CD4-positive, alpha-beta T cell (primary cell): ENCODE measurements at regions of chr17 and their contacts with region 1.

Region 1: GRCh38 chr17:57849874-57850754 is at the start of gene MRPS23:
- DNase-seq: peak; percentile 92 to 99 (median 95)
- ATAC-seq: peak; percentile 91
- H3K4me3 ChIP-seq: peak within 1 kb of the TSS; percentile 99
- H3K4me3 Mint-ChIP-seq: peak within 1 kb of the TSS; percentile 95
- H3K27ac ChIP-seq: peak within 1 kb of the TSS; percentile 88 to 93
- H3K27ac Mint-ChIP-seq: peak within 1 kb of the TSS; percentile 97
- H3K4me1 ChIP-seq: peaks cover 42% of the 10 kb centered on the region
- H3K4me1 Mint-ChIP-seq: peaks cover 45% of the 10 kb centered on the region
- H3K27me3 ChIP-seq: no peaks in the 10 kb centered on the region
- H3K27me3 Mint-ChIP-seq: no peaks in the 10 kb centered on the region
- CTCF ChIP-seq: no peak
- total RNA-seq, gene MRPS23: 14.6 to 14.7 TPM

Region 2: GRCh38 chr17:57255776-57256681 is 594.1 kb before region 1 on chr17 and contains the start of gene MSI2:
- CTCF ChIA-PET with region 1: no interaction called
- POLR2A ChIA-PET with region 1: interaction called, 3 read pairs
- intact Hi-C with region 1: loop called in 1 of 2 experiments (anchors 5 kb)
- DNase-seq: peak; percentile 82 to 96 (median 90)
- ATAC-seq: peak; percentile 71
- H3K4me3 ChIP-seq: peak within 1 kb of the TSS; percentile 74
- H3K4me3 Mint-ChIP-seq: peak within 1 kb of the TSS; percentile 99
- H3K27ac ChIP-seq: peak within 1 kb of the TSS; percentile 72 to 82
- H3K27ac Mint-ChIP-seq: peak within 1 kb of the TSS; percentile 98
- H3K4me1 ChIP-seq: peaks cover 35% of the 10 kb centered on the region
- H3K4me1 Mint-ChIP-seq: peaks cover 48% of the 10 kb centered on the region
- H3K27me3 ChIP-seq: no peaks in the 10 kb centered on the region
- H3K27me3 Mint-ChIP-seq: no peaks in the 10 kb centered on the region
- CTCF ChIP-seq: no peak
- total RNA-seq, gene MSI2: 129 to 132 TPM

Region 3: GRCh38 chr17:57861000-57861789 is 11.1 kb after region 1 on chr17:
- CTCF ChIA-PET with region 1: no interaction called
- POLR2A ChIA-PET with region 1: interaction called, 44 read pairs
- intact Hi-C with region 1: no loop called
- DNase-seq: peak in 12 of 14 experiments; percentile 19 to 75 (median 42)
- ATAC-seq: peak; percentile 74
- H3K4me3 ChIP-seq: peak overlapping the region; percentile 52
- H3K4me3 Mint-ChIP-seq: peak overlapping the region; percentile 89
- H3K27ac ChIP-seq: no peak overlapping the region
- H3K27ac Mint-ChIP-seq: no peak overlapping the region
- H3K4me1 ChIP-seq: peaks cover 21% of the 10 kb centered on the region
- H3K4me1 Mint-ChIP-seq: peaks cover 10% of the 10 kb centered on the region
- H3K27me3 ChIP-seq: peaks cover 10 to 14% of the 10 kb centered on the region in 2 experiments
- H3K27me3 Mint-ChIP-seq: peaks cover 14% of the 10 kb centered on the region
- CTCF ChIP-seq: no peak

Region 4: GRCh38 chr17:57995076-57995956 is 145.2 kb after region 1 on chr17:
- CTCF ChIA-PET with region 1: interaction called, 5 read pairs
- POLR2A ChIA-PET with region 1: interaction called, 27 read pairs
- intact Hi-C with region 1: no loop called
- DNase-seq: peak; percentile 27 to 81 (median 41)
- ATAC-seq: peak; percentile 89
- H3K4me3 ChIP-seq: no peak overlapping the region
- H3K4me3 Mint-ChIP-seq: peak overlapping the region; percentile 25
- H3K27ac ChIP-seq: peak overlapping the region; percentile 9 to 12
- H3K27ac Mint-ChIP-seq: peak overlapping the region; percentile 37
- H3K4me1 ChIP-seq: peaks cover 15% of the 10 kb centered on the region
- H3K4me1 Mint-ChIP-seq: peaks cover 56% of the 10 kb centered on the region
- H3K27me3 ChIP-seq: no peaks in the 10 kb centered on the region
- H3K27me3 Mint-ChIP-seq: no peaks in the 10 kb centered on the region
- CTCF ChIP-seq: peak; percentile 73

Region 5: DNA sequence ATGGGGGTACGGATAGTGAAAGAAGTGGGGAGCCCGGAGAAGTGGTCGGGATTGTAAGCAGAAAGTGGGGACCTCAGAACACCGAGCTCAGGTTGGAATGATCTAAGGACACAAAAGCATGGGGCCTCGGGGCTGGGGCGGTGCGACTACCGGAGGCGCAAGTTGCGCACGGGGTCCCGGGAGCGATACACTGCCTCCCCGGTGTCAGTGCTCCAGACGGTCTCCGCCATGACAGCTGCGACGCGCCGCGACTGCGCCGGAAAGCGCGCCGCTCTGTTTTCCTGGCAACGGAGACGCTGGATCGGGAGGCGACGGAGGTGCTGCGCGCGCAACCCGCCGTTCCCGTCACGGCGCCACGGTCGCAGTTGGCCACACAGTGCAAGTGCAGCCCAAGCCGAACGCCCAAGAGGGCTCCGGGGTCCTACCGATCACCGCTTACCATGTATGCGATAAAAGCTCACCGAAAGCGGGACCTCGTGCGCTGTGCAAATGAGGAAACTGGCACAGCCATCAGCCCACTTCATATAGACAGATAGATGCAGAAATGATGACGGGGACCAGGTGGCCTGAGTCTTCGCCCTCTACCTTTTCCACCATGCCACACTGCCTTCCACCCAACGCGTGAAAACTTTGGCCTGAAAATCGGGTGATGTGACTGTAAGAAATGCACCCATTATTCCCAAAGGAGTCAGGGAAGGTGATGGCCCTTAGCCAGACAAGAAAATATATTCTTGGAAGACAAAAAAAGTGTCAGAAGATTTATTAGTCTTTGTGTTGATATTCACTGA is 369.1 kb after region 1 on chr17 and contains the start of gene MKS1:
- CTCF ChIA-PET with region 1: no interaction called
- POLR2A ChIA-PET with region 1: interaction called, 6 read pairs
- intact Hi-C with region 1: loop called in 1 of 2 experiments (anchors 5 kb)
- DNase-seq: peak; percentile 92 to 97 (median 95)
- ATAC-seq: peak; percentile 97
- H3K4me3 ChIP-seq: peak within 1 kb of the TSS; percentile 88
- H3K4me3 Mint-ChIP-seq: peak within 1 kb of the TSS; percentile 90
- H3K27ac ChIP-seq: peak within 1 kb of the TSS; percentile 62 to 79
- H3K27ac Mint-ChIP-seq: peak within 1 kb of the TSS; percentile 90
- H3K4me1 ChIP-seq: peaks cover 16% of the 10 kb centered on the region
- H3K4me1 Mint-ChIP-seq: peaks cover 25% of the 10 kb centered on the region
- H3K27me3 ChIP-seq: no peaks in the 10 kb centered on the region
- H3K27me3 Mint-ChIP-seq: no peaks in the 10 kb centered on the region
- CTCF ChIP-seq: peak; percentile 78
- total RNA-seq, gene MKS1: 4.6 to 6.4 TPM